ENCODE measurements at regions of chr4 and their contacts with region 1.

Region 1: DNA sequence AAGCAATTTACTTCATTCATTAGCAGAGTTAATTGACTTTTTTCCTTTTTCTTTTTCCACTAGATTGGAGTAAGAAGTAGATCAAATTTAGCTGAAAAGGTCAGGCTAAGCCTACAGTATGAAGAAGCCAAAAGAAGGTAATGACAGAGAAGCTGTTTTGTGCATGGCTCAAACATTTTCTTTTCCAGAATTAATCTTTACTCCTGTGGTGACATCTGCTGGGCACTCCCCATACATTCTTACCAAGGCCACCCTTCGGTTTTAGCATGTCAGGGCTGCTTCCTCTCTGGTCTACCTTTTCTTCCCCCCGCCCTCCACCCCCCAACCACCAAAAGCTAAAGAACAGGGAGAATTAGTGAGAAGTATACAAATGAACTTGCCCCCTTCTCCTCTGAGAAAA is 70.2 kb downstream of the CLDN22 start:
- DNase-seq: peak; percentile 41 to 49
- H3K4me3 ChIP-seq: no peak overlapping the region
- H3K27ac ChIP-seq: no peak overlapping the region
- H3K4me1 ChIP-seq: no peaks in the 10 kb centered on the region
- H3K27me3 ChIP-seq: no peaks in the 10 kb centered on the region
- CTCF ChIP-seq: peak in 4 of 6 experiments; percentile 42 to 57 (median 50)
- POLR2A ChIP-seq: no peak

Region 2: DNA sequence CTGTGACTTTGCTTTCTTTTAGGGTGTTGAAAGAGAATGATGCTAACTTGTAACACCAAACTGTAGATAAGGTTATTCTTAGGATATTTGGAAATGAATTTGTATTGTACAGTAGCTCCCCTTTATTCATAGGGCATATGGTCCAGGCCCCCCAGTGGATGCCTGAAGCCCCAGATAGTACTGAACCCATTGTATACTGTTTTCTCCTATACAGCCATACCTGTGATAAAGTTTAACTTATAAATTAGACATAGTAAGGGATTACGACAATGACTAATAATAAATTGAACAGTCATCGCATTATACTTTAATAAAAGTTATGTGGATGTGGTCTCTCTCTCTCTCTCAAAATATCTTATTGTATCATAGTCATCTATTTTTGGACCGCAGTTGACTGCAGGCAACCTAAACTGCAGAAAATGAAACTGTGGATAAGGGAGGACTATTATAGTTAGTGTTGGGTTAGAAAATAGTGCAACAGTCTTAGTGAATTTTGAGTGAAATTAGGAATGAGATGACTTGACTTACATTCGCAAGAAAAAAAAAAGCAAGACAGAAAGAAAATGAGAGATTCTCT is 34.9 kb before region 1 on chr4:
- intact Hi-C with region 1: loop called (anchors 2 kb)
- DNase-seq: no peak
- H3K4me3 ChIP-seq: no peak overlapping the region
- H3K27ac ChIP-seq: no peak overlapping the region
- H3K4me1 ChIP-seq: no peaks in the 10 kb centered on the region
- H3K27me3 ChIP-seq: no peaks in the 10 kb centered on the region
- CTCF ChIP-seq: no peak
- POLR2A ChIP-seq: no peak

Region 3: GRCh38 chr4:183355405-183355804 is 105.5 kb after region 1 on chr4:
- intact Hi-C with region 1: no loop called
- DNase-seq: no peak
- H3K4me3 ChIP-seq: no peak overlapping the region
- H3K27ac ChIP-seq: no peak overlapping the region
- H3K4me1 ChIP-seq: no peaks in the 10 kb centered on the region
- H3K27me3 ChIP-seq: no peaks in the 10 kb centered on the region
- CTCF ChIP-seq: no peak
- POLR2A ChIP-seq: no peak

Measured in thyroid gland (tissue), 4 donors.